ENCODE measurements at regions of chr16 and their contacts with region 1.

Region 1: DNA sequence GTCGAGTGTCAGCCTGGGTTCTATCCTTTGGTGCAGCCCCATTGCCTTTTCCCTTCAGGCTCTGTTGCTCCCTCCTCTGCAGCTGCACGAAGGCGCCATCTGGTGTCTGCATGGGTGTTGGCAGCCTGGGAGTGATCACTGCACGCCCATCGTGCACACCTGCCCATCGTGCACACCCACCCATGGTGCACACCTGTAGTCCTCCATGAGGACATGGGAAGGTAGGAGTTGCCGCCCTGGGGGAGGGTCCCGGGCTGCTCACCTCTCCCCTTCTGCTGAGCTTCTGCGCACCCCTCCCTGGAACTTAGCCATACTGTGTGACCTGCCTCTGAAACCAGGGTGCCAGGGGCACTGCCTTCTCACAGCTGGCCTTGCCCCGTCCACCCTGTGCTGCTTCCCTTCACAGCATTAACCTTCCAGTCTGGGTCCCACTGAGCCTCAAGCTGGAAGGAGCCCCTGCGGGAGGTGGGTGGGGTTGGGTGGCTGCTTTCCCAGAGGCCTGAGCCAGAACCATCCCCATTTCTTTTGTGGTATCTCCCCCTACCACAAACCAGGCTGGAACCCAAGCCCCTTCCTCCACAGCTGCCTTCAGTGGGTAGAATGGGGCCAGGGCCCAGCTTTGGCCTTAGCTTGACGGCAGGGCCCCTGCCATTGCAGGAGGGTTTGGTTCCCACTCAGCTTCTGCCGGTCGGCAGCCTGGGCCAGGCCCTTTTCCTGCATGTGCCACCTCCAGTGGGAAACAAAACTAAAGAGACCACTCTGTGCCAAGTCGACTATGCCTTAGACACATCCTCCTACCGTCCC is 2.9 kb downstream of the CTRL start:
- DNase-seq: peak; percentile 77
- H3K27ac ChIP-seq: peak overlapping the region; percentile 9; the same call in 1 of the 2 replicates
- CTCF ChIP-seq: peak; percentile 92

Region 2: DNA sequence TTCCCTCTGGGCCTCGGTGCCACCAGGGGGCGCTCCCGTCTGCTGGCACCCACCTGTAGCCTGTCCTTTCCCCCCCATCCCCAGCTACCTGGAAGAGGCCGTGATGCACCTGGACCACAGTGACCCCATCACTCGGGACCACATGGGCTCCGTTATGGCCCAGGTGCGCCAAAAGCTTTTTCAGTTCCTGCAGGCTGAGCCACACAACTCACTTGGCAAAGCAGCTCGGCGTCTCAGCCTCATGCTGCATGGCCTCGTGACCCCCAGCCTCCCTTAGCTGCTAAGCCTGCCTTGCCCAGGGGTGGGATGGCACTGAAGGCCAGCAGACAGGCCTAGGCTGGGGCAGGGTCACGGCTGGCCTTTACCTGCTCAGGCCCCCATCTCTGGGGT is 44.9 kb before region 1 on chr16:
- CTCF ChIA-PET with region 1: interaction called, 19 read pairs
- POLR2A ChIA-PET with region 1: no interaction called
- DNase-seq: peak; percentile 72
- H3K27ac ChIP-seq: peak overlapping the region; percentile 77
- CTCF ChIP-seq: peak; percentile 87

Region 3: DNA sequence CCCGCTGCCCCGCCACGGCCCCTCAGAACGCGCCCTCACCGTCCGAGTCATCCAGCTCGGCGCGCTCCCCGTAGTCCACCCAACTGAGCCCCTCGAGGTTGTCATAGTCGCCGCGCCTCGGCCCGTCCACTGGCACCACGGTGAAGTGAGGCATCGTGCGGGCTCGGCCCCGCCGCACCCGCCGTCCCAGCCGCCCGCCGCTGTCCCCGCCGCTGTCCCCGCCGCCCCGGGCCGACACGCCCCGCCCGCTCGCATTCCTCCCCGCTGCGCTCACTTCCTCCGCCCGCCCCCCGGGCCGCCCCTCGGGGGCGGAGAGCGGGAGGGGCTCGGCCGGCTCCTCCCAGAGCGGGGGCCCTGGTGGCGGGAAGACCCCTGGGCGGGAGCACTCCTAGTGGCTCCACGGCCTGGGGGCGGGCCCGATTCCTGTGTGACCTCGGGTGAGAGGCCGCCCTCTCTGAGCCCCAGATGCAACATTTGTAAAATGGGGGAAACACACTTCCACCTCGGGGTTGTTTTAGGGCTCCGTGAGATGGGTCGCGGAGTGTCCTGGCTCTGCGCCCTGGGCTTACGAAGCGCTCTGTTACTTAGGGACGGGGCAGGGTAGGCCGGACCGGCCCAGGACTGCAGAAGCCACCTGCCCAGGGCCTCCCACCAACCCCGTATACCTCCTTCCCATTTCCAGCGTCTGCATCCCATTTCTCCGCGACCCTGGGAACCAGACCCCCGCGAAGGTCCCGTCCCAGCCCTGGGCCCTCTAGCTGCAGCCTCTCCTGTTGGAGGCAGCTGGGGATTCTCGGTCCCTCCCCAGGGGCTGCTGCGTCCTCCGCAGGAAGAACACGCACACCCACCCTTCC is 39.9 kb after region 1 on chr16 and contains the start of gene SLC12A4:
- CTCF ChIA-PET with region 1: no interaction called
- POLR2A ChIA-PET with region 1: no interaction called
- DNase-seq: peak; percentile 92
- H3K27ac ChIP-seq: peak within 1 kb of the TSS; percentile 89
- CTCF ChIP-seq: no peak

Measured in RWPE1 (cell line).